PC-9 (cell line): ENCODE measurements at regions of chr20 and their contacts with region 1.

Region 1: GRCh38 chr20:38559764-38560163 is 21.2 kb upstream of the ADIG start:
- DNase-seq: no peak
- H3K4me3 ChIP-seq: no peak overlapping the region
- H3K27ac ChIP-seq: no peak overlapping the region
- H3K4me1 ChIP-seq: no peaks in the 10 kb centered on the region
- H3K27me3 ChIP-seq: no peaks in the 10 kb centered on the region
- CTCF ChIP-seq: no peak

Region 2: DNA sequence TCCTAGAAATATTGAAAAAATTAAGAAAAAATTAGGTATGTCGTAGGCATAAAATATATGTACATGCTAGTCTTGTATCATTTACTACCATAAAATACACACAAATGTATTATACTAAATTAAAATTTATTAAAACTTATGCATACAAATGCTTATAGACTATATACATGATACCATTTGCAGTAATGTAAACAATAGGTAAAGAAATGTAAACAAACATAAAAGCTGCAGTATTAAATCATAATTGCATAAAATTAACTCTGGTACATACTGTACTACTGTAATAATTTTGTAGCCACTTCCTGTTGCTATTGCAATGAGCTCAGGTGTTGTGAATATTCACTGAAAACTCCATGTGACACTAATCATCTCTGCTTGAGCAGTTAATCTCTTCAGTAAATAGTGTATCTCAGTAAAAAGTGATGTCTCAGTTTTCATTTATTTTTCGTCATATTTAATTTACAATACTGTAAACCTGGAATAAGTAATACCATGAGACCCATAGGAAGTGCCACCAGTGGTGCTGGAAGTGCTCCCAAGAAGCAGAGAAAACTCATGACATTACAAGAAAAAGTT is 57.8 kb before region 1 on chr20:
- CTCF ChIA-PET with region 1: no interaction called
- POLR2A ChIA-PET with region 1: no interaction called
- intact Hi-C with region 1: loop called (anchors 10 kb)
- DNase-seq: no peak
- H3K4me3 ChIP-seq: no peak overlapping the region
- H3K27ac ChIP-seq: no peak overlapping the region
- H3K4me1 ChIP-seq: no peaks in the 10 kb centered on the region
- H3K27me3 ChIP-seq: no peaks in the 10 kb centered on the region
- CTCF ChIP-seq: no peak